ENCODE measurements at regions of chr17 and their contacts with region 1.

Region 1: DNA sequence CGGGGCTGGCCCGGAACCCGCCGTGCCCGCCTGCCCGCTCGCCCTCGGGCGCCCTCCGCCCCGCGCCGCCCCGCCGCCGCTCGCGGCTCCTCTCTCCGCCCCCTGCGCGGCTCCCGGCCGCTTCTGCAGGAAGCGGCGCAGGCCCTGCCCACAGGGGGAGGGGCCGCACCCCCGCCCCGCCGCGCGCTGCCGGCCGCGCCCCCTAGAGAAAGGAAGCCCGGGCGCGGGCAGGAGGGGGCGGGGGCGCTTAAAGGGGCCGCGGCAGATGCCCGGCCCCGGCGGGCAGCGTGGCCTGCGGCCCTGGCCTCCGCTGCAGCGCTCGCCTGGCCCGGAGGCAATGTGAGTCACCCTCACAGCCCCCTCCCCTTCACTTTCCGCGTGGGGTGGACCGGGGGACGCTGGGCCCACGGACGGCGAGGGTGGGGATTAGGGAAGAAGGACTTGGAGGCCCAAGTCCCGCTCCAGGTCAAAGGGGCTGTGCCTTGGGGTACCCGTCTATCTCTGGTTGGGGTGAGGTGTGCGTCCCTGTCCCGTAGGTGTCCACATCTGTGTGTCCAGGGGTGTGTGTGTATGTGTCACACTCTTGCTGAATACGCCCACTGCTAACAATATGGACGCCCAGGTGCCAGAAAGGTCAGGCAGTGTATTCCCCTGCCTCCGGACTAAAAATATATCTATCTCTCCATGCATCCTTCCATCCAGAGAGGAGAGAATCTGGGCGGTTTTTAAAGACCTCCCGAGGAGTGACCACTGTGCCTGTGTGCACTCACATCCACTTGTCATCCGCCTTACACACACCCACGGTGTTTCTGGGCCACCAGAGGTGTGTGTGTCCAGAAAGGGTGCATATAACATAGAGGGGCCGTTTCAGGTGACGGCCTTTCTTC is at the start of gene GIT1:
- DNase-seq: peak; percentile 82
- H3K4me3 ChIP-seq: peak within 1 kb of the TSS; percentile 58 to 69 (median 68)
- H3K27ac ChIP-seq: peak within 1 kb of the TSS; percentile 66
- H3K4me1 ChIP-seq: peaks cover 76% of the 10 kb centered on the region
- H3K27me3 ChIP-seq: no peaks in the 10 kb centered on the region
- CTCF ChIP-seq: no peak
- POLR2A ChIP-seq: peak; percentile 75
- total RNA-seq, gene GIT1: 82.0 and 92.5 TPM in 2 replicates

Region 2: GRCh38 chr17:29568331-29569244 is 21.2 kb before region 1 on chr17 and contains the start of gene TP53I13:
- CTCF ChIA-PET with region 1: interaction called, 34 read pairs
- POLR2A ChIA-PET with region 1: interaction called, 3 read pairs
- dilution Hi-C with region 1: no loop called
- intact Hi-C with region 1: loop called (anchors 1 kb)
- DNase-seq: peak; percentile 82
- H3K4me3 ChIP-seq: peak within 1 kb of the TSS; percentile 46 to 77 (median 70)
- H3K27ac ChIP-seq: peak within 1 kb of the TSS; percentile 24
- H3K4me1 ChIP-seq: peaks cover 26% of the 10 kb centered on the region
- H3K27me3 ChIP-seq: no peaks in the 10 kb centered on the region
- CTCF ChIP-seq: no peak
- POLR2A ChIP-seq: peak; percentile 57
- total RNA-seq, gene TP53I13: 33.8 and 41.1 TPM in 2 replicates